Left cardiac atrium (tissue), 4 donors: ENCODE measurements at regions of chr10 and their contacts with region 1.

Region 1: GRCh38 chr10:89262086-89263051 is 10.8 kb upstream of the LIPA start:
- DNase-seq: no peak
- ATAC-seq: no peak

Region 2: DNA sequence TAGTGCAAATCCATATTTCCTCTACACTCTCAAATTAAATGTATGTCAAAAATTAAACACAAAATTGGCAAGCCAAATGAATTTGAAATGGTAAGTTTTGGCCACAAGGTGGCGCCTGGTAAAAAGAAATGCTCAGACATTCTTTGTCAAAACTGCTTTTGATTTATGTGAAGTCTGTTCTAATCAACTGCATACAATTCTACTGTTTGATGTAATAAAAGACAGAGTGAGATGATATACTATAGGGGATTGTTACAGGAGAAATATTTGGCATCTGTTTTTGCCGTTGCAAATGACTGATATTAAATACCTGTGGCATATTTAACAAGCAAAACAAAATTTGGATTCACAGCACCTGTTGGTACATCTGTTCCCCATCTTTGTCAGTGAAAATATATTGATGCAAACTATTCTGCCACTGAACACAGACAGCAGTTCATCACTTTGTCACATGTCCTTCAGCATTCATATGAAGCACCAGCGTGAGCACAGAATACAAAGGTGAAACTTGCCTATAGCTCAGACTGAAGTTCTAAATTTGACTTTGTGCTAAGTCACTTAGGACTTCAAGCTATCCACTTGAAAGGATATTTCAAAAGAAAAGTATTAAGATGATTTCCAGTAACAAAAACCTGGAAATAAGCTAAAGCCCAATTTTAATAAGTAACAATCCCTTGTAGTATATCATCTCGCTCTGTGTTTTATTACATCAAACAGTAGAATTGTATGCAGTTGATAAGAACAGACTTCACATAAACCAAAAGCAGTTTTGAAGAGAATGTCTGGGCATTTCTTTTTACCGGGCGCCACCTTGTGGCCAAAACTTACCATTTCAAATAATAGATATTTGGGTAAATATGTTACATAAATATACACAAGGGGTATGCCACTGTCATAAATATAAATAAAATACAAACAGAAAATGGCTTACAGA is 45.0 kb before region 1 on chr10:
- intact Hi-C with region 1: no loop called
- DNase-seq: peak; percentile 56
- ATAC-seq: peak; percentile 39 to 45

Region 3: GRCh38 chr10:89369156-89370105 is 107.1 kb after region 1 on chr10:
- intact Hi-C with region 1: no loop called
- DNase-seq: no peak
- ATAC-seq: peak; percentile 36 to 56

Region 4: DNA sequence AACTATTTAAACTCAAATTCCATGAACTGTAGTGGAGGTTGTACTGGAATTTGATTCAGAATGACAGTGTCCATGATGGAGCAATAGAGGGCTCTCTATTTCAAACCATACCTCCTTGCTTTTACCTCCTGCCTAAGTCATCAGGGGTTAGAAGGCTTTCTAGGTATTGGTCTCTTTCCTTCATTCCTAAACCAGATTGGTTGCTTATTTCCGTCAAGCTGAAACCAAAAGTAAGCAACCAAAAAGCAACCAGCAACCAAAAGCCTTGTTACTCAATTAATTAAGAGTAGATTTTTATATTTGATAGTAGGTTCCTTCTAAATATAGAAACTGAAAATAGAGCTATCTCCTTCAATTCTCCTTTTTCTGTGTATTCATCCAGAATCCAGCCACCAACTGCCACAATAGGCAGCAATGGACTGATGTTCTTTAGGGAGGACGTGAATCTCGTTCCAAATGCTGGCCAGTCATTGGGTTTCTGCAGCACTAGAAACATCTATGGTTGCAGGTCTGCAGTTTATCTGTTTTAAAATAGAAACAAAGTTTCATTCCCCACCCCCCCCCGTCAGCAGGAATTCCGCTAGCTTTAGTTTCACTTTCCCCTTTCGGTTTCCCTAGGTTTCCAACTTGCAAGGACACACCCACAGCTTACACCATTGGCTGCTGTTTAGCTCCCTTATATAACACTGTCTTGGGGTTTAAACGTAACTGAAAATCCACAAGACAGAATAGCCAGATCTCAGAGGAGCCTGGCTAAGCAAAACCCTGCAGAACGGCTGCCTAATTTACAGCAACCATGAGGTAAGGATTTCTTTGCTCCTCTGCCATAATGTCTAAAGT is 129.8 kb after region 1 on chr10 and contains the start of gene IFIT1:
- intact Hi-C with region 1: loop called in 1 of 2 experiments (anchors 2 kb)
- DNase-seq: no peak
- ATAC-seq: peak; percentile 96 to 98
- total RNA-seq, gene IFIT1: 15.3 to 20.6 TPM